Common myeloid progenitor, CD34-positive (primary cell): ENCODE measurements at regions of chr15 and their contacts with region 1.

Region 1: DNA sequence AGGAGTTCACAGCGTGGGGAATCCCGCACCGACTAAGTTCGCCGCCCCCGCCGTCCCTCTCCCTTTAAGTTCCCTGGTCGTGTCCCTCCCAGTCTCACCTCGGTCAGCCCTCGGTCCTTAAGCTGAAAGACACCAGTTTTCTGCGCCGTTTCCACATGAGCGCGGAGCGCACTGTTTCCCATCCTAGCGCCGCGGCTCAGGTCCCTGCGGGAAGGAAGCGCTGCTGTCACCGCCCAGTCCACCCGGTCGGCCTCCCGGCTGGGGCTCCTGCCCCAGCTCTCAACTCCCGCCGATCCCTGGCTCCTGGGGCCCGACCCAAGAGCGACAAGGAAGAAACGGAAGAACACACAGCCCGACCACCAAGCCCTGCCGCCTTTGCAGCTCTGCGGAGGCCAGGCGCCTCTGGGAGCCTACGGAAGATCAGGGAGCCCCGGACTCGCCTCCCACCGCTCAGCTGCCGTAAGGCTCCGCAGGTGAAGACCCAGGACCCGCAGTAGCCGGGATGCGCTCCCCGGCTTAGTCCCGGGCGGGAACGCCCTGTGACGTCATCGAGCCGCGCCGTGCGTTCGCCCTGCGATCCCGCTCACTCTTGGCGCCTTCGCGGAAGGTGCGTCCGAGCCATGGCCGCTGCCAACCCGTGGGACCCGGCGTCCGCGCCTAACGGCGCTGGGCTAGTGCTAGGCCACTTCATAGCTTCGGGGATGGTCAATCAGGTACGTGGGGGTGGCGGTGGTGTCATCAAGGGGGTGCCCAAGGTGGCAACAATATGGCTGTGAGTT is at the starts of genes HAUS2 and LRRC57:
- DNase-seq: peak; percentile 86 to 88 (median 88)
- H3K4me3 ChIP-seq: peak within 1 kb of the TSS; percentile 85 to 99 (median 98)
- H3K27ac ChIP-seq: peak within 1 kb of the TSS; percentile 91 to 95
- H3K4me1 ChIP-seq: peaks cover 15 to 51% (median 32%) of the 10 kb centered on the region in 4 experiments
- H3K27me3 ChIP-seq: no peaks in the 10 kb centered on the region

Region 2: DNA sequence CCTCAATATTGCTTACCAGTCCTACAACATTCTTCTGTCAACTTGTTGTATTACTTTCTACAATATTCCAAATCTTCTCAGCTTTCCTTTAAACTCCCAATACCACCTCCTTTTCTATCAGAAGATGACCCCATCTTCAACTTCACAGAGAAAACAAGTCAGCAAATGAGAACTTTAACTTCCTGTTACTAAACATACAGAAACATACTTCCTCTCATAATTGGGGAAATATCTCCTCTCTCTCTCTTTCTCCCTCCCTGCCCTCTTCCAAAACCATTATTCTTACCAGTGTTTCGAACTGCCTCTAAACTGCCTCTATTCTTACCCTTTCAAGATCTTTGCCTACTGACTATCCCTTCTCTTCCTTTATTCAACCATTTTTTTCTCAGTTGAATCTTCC is 54.8 kb before region 1 on chr15:
- CTCF ChIA-PET with region 1: interaction called, 4 read pairs
- POLR2A ChIA-PET with region 1: interaction called, 10 read pairs
- DNase-seq: no peak
- H3K4me3 ChIP-seq: peak overlapping the region in 3 of 7 experiments; percentile 11 to 38 (median 34)
- H3K27ac ChIP-seq: no peak overlapping the region
- H3K4me1 ChIP-seq: peaks cover 21 to 55% (median 38%) of the 10 kb centered on the region in 4 experiments
- H3K27me3 ChIP-seq: no peaks in the 10 kb centered on the region

Region 3: GRCh38 chr15:42533246-42533645 is 15.2 kb before region 1 on chr15:
- CTCF ChIA-PET with region 1: interaction called, 10 read pairs
- POLR2A ChIA-PET with region 1: no interaction called
- DNase-seq: no peak
- H3K4me3 ChIP-seq: no peak overlapping the region
- H3K27ac ChIP-seq: no peak overlapping the region
- H3K4me1 ChIP-seq: no peaks in the 10 kb centered on the region
- H3K27me3 ChIP-seq: no peaks in the 10 kb centered on the region

Region 4: GRCh38 chr15:42575188-42576039 is 27.0 kb after region 1 on chr15 and contains the start of gene STARD9:
- CTCF ChIA-PET with region 1: interaction called, 3 read pairs
- POLR2A ChIA-PET with region 1: interaction called, 12 read pairs
- DNase-seq: peak; percentile 96 to 99 (median 98)
- H3K4me3 ChIP-seq: peak within 1 kb of the TSS; percentile 67 to 91 (median 83)
- H3K27ac ChIP-seq: peak within 1 kb of the TSS in 1 of 2 experiments; percentile 64
- H3K4me1 ChIP-seq: peaks cover 10 to 51% (median 38%) of the 10 kb centered on the region in 4 experiments
- H3K27me3 ChIP-seq: no peaks in the 10 kb centered on the region